A549 (cell line): ENCODE measurements at regions of chr5 and their contacts with region 1.

Region 1: DNA sequence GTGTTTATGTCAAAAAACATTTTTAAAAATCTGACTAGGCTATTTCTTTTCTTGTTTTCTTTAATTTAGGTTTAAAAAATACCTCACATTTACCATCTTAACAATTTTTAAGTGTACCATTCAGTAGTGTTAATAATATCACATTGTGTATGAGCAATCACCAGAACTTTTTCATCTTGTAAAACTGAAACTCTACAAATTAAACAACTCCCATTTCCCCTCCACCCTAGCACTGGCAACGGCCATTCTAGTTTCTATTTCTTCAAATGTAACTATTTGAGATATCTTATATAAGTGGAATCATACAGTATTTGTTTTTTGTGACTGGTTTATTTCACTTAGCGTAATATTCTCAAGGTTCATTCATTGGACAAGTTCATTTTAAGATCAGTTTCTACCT is 27.7 kb downstream of the PLCXD3 start:
- DNase-seq: no peak
- ATAC-seq: no peak
- H3K4me3 ChIP-seq: no peak overlapping the region
- H3K27ac ChIP-seq: no peak overlapping the region
- H3K4me1 ChIP-seq: no peaks in the 10 kb centered on the region
- CTCF ChIP-seq: no peak
- EP300 ChIP-seq: no peak
- POLR2A ChIP-seq: no peak
- RAD21 ChIP-seq: no peak

Region 2: DNA sequence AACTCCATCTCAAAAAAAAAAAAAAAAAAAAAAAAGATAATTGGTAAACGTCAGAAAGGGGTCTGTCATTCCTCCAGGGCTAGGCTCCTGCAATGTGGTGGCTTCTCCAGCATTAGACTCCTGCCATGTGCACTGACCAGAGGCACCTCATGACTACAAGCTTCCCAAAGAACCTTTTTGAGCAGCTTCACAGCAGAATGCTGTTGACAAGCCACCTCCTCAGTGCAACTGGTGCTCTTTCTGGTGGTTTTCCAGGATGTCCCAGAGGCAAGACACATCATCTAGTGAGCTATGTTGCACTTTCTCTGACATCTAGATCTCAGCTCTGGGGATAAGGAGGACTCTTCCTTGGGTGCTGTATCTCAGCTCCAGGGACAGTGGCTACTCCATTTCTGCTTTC is 659.3 kb before region 1 on chr5:
- CTCF ChIA-PET with region 1: no interaction called
- POLR2A ChIA-PET with region 1: interaction called, 11 read pairs
- DNase-seq: no peak
- ATAC-seq: peak; percentile 55 to 69
- H3K4me3 ChIP-seq: no peak overlapping the region
- H3K27ac ChIP-seq: no peak overlapping the region
- H3K4me1 ChIP-seq: no peaks in the 10 kb centered on the region
- CTCF ChIP-seq: no peak
- EP300 ChIP-seq: no peak
- POLR2A ChIP-seq: no peak
- RAD21 ChIP-seq: no peak

Region 3: DNA sequence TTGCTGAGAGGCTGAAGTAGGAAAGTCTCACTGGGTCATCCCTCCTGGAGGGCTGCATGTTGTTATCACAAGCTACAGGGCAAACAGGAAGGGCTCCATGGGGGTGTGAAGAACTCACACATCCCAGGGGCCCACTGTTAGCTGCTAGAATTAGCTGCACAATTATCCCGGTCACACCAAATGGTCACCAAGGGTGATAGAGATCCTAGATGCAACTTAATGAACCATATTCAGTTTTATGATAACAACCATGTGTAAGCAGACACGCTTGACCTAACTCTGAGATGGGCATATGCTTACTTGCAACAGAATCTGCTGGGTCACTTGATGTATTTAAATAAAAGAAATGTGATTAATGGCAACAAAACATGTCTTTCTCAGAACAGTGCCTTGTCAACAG is 125.9 kb before region 1 on chr5:
- CTCF ChIA-PET with region 1: no interaction called
- POLR2A ChIA-PET with region 1: no interaction called
- DNase-seq: no peak
- ATAC-seq: no peak
- H3K4me3 ChIP-seq: no peak overlapping the region
- H3K27ac ChIP-seq: no peak overlapping the region
- H3K4me1 ChIP-seq: no peaks in the 10 kb centered on the region
- CTCF ChIP-seq: no peak
- EP300 ChIP-seq: no peak
- POLR2A ChIP-seq: no peak
- RAD21 ChIP-seq: no peak

Region 4: GRCh38 chr5:41465493-41466171 is 17.1 kb before region 1 on chr5:
- CTCF ChIA-PET with region 1: no interaction called
- POLR2A ChIA-PET with region 1: no interaction called
- DNase-seq: no peak
- ATAC-seq: no peak
- H3K4me3 ChIP-seq: no peak overlapping the region
- H3K27ac ChIP-seq: no peak overlapping the region
- H3K4me1 ChIP-seq: no peaks in the 10 kb centered on the region
- CTCF ChIP-seq: no peak
- EP300 ChIP-seq: no peak
- POLR2A ChIP-seq: no peak
- RAD21 ChIP-seq: no peak